B cell (primary cell): ENCODE measurements at regions of chr2 and their contacts with region 1.

Region 1: DNA sequence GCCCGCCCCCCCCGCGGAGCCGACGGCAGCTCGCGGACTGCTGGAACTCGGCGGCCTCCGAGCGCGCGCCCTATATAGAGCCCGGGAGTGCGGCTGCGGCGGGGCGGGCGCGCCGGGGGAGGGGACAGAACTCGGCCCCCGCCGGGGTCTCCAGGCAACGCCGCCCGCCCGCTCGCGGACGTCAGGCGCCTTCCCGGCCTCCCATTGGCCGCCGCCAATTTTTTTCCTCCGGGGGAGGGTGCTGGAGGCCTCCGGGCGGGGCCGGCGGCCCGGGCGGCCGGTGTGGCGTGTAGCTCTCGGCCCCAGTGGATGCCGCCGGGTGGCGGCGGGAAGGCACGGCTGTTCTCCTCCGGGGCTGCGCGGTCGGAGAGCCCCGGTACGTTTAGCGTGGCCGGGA is at the start of gene ZFP36L2:
- DNase-seq: peak; percentile 96
- ATAC-seq: peak; percentile 65
- H3K4me3 ChIP-seq: peak within 1 kb of the TSS; percentile 76 to 98 (median 92)
- H3K4me3 Mint-ChIP-seq: peak within 1 kb of the TSS; percentile 98
- H3K27ac ChIP-seq: peak within 1 kb of the TSS; percentile 90 to 93
- H3K27ac Mint-ChIP-seq: peak within 1 kb of the TSS; percentile 97
- H3K4me1 ChIP-seq: peaks cover 36 to 56% of the 10 kb centered on the region in 2 donors
- H3K4me1 Mint-ChIP-seq: peaks cover 50% of the 10 kb centered on the region
- H3K27me3 ChIP-seq: no peaks in the 10 kb centered on the region
- H3K27me3 Mint-ChIP-seq: no peaks in the 10 kb centered on the region
- CTCF ChIP-seq: no peak
- total RNA-seq, gene ZFP36L2: 455 and 482 TPM in 2 replicates

Region 2: DNA sequence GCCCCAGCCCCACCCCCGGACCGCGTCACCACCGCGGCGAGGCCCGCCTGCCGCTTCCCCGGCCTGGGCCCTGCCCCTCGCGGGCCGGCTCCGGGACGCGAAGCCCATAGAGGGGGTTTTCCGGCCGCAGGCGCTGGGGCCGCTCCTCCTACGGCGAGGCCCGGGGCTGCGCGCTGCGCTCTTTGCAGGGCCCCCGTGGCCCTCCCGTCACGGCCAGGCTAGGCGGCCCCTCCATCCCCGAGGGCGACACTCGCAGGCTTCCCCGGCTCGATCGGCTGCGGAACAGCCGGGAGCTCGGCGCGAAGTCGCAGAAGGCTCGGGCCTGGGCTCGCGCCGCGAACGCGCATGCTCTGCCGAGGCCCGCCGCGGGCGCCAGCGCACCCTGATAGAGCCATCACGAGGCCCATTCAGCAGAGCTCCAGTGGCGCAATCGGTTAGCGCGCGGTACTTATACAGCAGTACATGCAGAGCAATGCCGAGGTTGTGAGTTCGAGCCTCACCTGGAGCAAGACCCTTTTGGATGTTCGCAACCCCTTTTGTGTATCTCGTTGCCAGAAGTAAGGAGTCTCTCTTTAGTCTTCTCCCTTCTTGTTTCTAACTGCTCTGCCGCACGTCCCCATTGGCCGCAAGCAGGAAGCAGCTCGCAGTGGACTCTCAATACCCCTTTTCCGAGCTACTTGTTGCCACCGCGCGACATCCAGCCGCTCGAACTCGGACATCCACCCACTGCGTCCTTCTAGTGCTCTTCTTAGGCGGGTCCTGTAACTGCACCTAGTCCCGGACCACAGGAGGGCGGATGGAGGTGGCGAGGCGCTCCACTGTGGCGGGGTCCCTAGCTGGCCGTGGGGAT is 416.2 kb before region 1 on chr2:
- CTCF ChIA-PET with region 1: no interaction called
- POLR2A ChIA-PET with region 1: interaction called, 8 read pairs
- intact Hi-C with region 1: loop called (anchors 5 kb)
- DNase-seq: peak; percentile 98
- ATAC-seq: peak; percentile 78
- H3K4me3 ChIP-seq: peak overlapping the region; percentile 62 to 97 (median 84)
- H3K4me3 Mint-ChIP-seq: peak overlapping the region; percentile 100
- H3K27ac ChIP-seq: peak overlapping the region; percentile 95
- H3K27ac Mint-ChIP-seq: peak overlapping the region; percentile 99
- H3K4me1 ChIP-seq: peaks cover 4 to 17% of the 10 kb centered on the region in 2 donors
- H3K4me1 Mint-ChIP-seq: peaks cover 25% of the 10 kb centered on the region
- H3K27me3 ChIP-seq: no peaks in the 10 kb centered on the region
- H3K27me3 Mint-ChIP-seq: no peaks in the 10 kb centered on the region
- CTCF ChIP-seq: no peak

Region 3: GRCh38 chr2:42944779-42945415 is 281.7 kb before region 1 on chr2:
- CTCF ChIA-PET with region 1: interaction called, 132 read pairs
- POLR2A ChIA-PET with region 1: interaction called, 16 read pairs
- intact Hi-C with region 1: loop called (anchors 1 kb)
- DNase-seq: no peak
- ATAC-seq: no peak
- H3K4me3 ChIP-seq: no peak overlapping the region
- H3K4me3 Mint-ChIP-seq: no peak overlapping the region
- H3K27ac ChIP-seq: no peak overlapping the region
- H3K27ac Mint-ChIP-seq: no peak overlapping the region
- H3K4me1 ChIP-seq: peaks cover 30 to 33% of the 10 kb centered on the region in 2 donors
- H3K4me1 Mint-ChIP-seq: peaks cover 33% of the 10 kb centered on the region
- H3K27me3 ChIP-seq: no peaks in the 10 kb centered on the region
- H3K27me3 Mint-ChIP-seq: no peaks in the 10 kb centered on the region
- CTCF ChIP-seq: no peak

Region 4: GRCh38 chr2:42974721-42975717 is 251.5 kb before region 1 on chr2:
- CTCF ChIA-PET with region 1: interaction called, 125 read pairs
- POLR2A ChIA-PET with region 1: interaction called, 10 read pairs
- intact Hi-C with region 1: loop called (anchors 1 kb)
- DNase-seq: peak; percentile 69
- ATAC-seq: peak; percentile 78
- H3K4me3 ChIP-seq: no peak overlapping the region
- H3K4me3 Mint-ChIP-seq: peak overlapping the region; percentile 26
- H3K27ac ChIP-seq: no peak overlapping the region
- H3K27ac Mint-ChIP-seq: no peak overlapping the region
- H3K4me1 ChIP-seq: peaks cover 30 to 31% of the 10 kb centered on the region in 2 donors
- H3K4me1 Mint-ChIP-seq: peaks cover 35% of the 10 kb centered on the region
- H3K27me3 ChIP-seq: peaks cover 0 to 3% (median 0%) of the 10 kb centered on the region in 4 experiments
- H3K27me3 Mint-ChIP-seq: no peaks in the 10 kb centered on the region
- CTCF ChIP-seq: peak; percentile 75

Region 5: GRCh38 chr2:43131024-43131889 is 95.3 kb before region 1 on chr2:
- CTCF ChIA-PET with region 1: interaction called, 650 read pairs
- POLR2A ChIA-PET with region 1: interaction called, 561 read pairs
- intact Hi-C with region 1: loop called (anchors 1 kb)
- DNase-seq: peak; percentile 90
- ATAC-seq: peak; percentile 54
- H3K4me3 ChIP-seq: peak overlapping the region in 1 of 5 experiments; percentile 19
- H3K4me3 Mint-ChIP-seq: peak overlapping the region; percentile 55
- H3K27ac ChIP-seq: peak overlapping the region; percentile 87 to 89
- H3K27ac Mint-ChIP-seq: peak overlapping the region; percentile 83
- H3K4me1 ChIP-seq: peaks cover 89 to 100% of the 10 kb centered on the region in 2 donors
- H3K4me1 Mint-ChIP-seq: peaks cover 92% of the 10 kb centered on the region
- H3K27me3 ChIP-seq: peaks cover 0 to 2% (median 0%) of the 10 kb centered on the region in 4 experiments
- H3K27me3 Mint-ChIP-seq: no peaks in the 10 kb centered on the region
- CTCF ChIP-seq: peak; percentile 69

Region 6: GRCh38 chr2:43194121-43194869 is 32.3 kb before region 1 on chr2:
- CTCF ChIA-PET with region 1: interaction called, 5 read pairs
- POLR2A ChIA-PET with region 1: interaction called, 10 read pairs
- intact Hi-C with region 1: no loop called
- DNase-seq: no peak
- ATAC-seq: no peak
- H3K4me3 ChIP-seq: no peak overlapping the region
- H3K4me3 Mint-ChIP-seq: peak overlapping the region; percentile 40
- H3K27ac ChIP-seq: peak overlapping the region; percentile 78 to 89
- H3K27ac Mint-ChIP-seq: peak overlapping the region; percentile 85
- H3K4me1 ChIP-seq: peaks cover 40 to 64% of the 10 kb centered on the region in 2 donors
- H3K4me1 Mint-ChIP-seq: peaks cover 43% of the 10 kb centered on the region
- H3K27me3 ChIP-seq: no peaks in the 10 kb centered on the region
- H3K27me3 Mint-ChIP-seq: no peaks in the 10 kb centered on the region
- CTCF ChIP-seq: no peak

Region 7: DNA sequence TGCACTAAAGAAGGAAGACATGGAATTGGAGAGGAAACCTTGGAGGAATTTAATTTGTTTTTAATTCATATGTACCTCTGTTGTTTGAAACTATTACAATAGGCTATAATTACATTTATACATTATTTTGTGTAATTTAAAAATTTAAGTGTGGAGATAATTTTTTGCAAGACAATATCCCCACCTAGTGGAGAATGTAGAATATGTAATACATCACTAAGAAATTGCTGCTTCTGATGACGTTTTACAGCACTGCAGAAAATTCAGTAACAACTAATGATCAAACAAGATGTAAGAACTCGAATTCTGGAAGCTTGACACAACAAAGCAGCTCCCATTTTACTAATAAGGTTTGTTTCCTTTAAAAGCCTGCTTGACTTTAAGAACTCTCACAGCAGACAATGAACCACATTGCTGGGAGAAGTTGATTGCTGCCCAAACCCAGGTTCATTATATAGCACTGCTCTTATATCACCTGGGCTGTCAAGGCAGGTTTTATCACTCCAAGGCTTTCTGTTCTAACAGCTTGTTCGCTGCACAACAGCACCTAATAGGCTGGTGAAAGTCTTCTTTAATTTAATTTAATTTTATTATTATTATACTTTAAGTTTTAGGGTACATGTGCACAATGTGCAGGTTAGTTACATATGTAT is 315.9 kb after region 1 on chr2:
- CTCF ChIA-PET with region 1: interaction called, 18 read pairs
- POLR2A ChIA-PET with region 1: interaction called, 3 read pairs
- intact Hi-C with region 1: loop called (anchors 5 kb)
- DNase-seq: peak; percentile 67
- ATAC-seq: peak; percentile 49
- H3K4me3 ChIP-seq: no peak overlapping the region
- H3K4me3 Mint-ChIP-seq: no peak overlapping the region
- H3K27ac ChIP-seq: no peak overlapping the region
- H3K27ac Mint-ChIP-seq: no peak overlapping the region
- H3K4me1 ChIP-seq: peaks cover 12% of the 10 kb centered on the region in 2 donors
- H3K4me1 Mint-ChIP-seq: peaks cover 13% of the 10 kb centered on the region
- H3K27me3 ChIP-seq: no peaks in the 10 kb centered on the region
- H3K27me3 Mint-ChIP-seq: no peaks in the 10 kb centered on the region
- CTCF ChIP-seq: peak; percentile 84